Right ventricle myocardium superior (tissue), 1 donor: ENCODE measurements at regions of chr10 and their contacts with region 1.

Region 1: GRCh38 chr10:97914837-97915211 is 65.2 kb downstream of the GOLGA7B start:
- DNase-seq: peak; percentile 85
- ATAC-seq: peak; percentile 92

Region 2: DNA sequence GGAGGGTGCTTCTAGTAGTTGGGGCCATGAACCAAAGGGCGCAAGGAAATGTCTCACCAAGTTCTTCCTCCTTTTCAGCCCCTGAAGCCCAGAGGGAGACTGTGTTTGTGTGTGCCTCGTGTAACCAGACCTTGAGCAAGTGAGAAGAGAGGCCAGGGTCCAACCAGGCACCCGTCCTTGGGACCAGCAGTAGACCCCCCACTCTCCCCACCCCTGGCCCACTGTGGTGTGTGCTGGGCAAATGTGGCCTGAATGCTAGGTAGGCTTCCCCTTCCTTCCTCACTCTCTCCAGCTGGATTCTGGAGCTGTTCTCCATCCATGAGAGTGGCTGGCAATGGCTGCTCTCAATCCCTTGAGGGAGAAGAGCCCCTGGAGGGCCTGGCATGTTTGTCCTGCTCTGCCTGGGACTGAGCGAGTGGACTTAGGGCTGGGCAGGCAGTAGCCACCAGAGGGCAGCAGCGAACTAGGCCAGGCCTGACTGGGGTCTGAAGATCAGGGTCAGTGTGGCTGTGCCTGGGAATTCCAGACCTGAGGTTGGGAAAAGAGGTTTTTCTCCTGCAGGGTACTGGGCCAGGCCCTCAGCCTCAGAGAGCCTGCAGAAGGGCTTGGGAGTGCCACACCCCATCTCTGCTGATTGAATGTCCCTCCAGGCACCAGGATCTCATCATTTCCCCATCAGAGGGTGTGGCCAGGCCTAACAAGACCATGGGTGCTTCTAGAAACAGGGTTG is 155.5 kb before region 1 on chr10:
- intact Hi-C with region 1: no loop called
- DNase-seq: peak; percentile 73
- ATAC-seq: peak; percentile 83

Region 3: DNA sequence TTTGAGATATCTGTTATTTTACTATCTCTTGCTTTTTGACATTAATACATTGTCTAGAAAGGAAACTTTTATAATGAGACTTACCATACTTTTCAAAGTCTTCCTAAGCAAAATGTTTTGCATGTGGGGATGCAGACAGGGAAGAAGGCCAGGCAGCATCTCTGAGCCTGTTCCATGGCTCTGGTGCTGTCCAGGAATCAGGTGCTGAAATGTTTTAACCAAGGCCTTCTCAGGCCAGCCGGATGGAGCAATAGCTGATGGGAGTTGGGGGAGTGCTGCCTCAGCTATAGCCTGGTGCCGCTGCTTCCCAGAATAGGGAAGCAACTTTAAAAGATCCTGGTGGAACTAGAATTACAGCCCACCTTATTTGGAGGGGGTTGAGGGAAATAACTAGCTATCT is 77.0 kb after region 1 on chr10:
- intact Hi-C with region 1: no loop called
- DNase-seq: no peak
- ATAC-seq: no peak

Region 4: DNA sequence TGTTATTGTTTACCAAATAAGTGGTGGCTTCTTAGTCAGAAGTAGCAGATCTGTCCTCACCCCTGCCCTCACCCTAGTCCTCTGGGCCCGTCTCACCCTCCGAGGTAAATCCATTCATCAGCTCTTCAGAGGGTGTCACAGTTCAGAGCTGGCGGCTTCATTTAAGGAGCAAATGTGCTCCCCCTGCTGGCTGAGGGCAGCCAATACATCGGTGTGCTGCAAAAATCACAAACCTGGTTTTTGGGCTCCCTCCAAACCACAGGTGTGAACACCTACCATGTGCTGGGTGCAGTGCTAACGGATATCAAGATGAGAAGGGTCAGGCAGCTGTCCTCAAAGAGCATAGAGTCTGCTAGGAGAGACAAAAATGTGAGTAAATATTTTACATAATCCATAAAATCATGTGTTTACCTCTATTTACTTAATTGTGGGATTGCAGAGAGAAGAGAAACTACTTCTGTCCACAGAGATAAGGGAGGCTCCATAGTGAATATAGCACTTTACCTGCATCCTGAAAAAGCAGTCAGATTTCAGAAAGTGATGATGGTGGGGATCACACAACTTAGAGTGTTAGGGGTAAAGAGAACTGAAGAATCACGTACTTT is 131.1 kb after region 1 on chr10:
- intact Hi-C with region 1: loop called (anchors 2 kb)
- DNase-seq: peak; percentile 48
- ATAC-seq: peak; percentile 67